HEK293 (cell line): ENCODE measurements at regions of chr15 and their contacts with region 1.

Region 1: GRCh38 chr15:79339564-79340314 is 28.8 kb downstream of the TMED3 start:
- H3K4me3 ChIP-seq: no peak overlapping the region
- H3K27ac ChIP-seq: no peak overlapping the region
- H3K4me1 ChIP-seq: no peaks in the 10 kb centered on the region
- CTCF ChIP-seq: peak; percentile 58; the same call in 1 of the 2 replicates

Region 2: DNA sequence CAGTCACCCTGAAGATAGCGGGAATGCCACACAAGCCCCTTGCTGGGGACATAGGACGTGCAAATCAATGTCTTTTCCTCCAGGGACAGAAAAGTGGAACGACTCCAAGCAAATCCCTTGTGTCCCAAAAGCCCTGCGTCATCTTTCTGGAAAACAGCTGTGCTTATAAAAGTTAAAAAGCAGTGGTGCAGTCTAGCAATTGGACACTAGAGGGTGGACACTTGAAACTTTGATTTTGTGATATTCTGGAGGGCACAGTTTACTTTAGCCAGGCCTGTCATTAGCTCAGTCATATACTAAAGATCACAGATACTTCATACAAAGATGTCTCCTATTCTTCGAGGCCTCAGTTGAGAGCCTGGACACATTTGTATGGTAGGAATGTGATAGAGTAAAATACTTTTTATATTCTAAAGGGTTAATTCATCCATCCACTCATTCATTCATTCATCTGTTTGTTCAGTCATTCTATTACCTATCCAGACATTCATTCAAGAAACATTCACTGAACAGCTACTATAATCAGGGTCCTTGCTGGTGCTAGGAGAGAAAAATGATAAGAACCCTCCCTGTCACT is 121.1 kb before region 1 on chr15:
- CTCF ChIA-PET with region 1: no interaction called
- POLR2A ChIA-PET with region 1: no interaction called
- H3K4me3 ChIP-seq: no peak overlapping the region
- H3K27ac ChIP-seq: no peak overlapping the region
- H3K4me1 ChIP-seq: no peaks in the 10 kb centered on the region
- CTCF ChIP-seq: no peak; the same call in 1 of the 2 replicates

Region 3: DNA sequence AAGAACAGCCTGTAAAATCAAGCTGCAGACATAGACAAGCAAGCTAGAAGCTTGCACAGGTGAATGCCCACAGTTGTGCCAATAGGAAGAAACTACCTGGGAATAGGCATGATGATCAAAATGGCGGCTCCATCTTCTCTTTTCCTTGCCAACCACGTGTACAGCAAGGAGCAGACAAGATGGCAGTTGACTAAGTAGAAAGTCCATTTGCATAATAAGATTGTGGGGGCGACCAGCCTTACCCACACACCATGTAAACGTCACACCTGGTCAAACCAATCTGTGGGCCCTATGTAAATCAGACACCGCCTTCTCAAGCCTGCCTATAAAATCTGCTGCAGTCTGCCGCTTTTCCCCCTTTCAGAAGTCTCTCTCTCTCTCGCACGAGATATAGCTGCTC is 82.3 kb before region 1 on chr15:
- CTCF ChIA-PET with region 1: no interaction called
- POLR2A ChIA-PET with region 1: no interaction called
- H3K4me3 ChIP-seq: no peak overlapping the region
- H3K27ac ChIP-seq: no peak overlapping the region
- H3K4me1 ChIP-seq: no peaks in the 10 kb centered on the region
- CTCF ChIP-seq: no peak

Region 4: DNA sequence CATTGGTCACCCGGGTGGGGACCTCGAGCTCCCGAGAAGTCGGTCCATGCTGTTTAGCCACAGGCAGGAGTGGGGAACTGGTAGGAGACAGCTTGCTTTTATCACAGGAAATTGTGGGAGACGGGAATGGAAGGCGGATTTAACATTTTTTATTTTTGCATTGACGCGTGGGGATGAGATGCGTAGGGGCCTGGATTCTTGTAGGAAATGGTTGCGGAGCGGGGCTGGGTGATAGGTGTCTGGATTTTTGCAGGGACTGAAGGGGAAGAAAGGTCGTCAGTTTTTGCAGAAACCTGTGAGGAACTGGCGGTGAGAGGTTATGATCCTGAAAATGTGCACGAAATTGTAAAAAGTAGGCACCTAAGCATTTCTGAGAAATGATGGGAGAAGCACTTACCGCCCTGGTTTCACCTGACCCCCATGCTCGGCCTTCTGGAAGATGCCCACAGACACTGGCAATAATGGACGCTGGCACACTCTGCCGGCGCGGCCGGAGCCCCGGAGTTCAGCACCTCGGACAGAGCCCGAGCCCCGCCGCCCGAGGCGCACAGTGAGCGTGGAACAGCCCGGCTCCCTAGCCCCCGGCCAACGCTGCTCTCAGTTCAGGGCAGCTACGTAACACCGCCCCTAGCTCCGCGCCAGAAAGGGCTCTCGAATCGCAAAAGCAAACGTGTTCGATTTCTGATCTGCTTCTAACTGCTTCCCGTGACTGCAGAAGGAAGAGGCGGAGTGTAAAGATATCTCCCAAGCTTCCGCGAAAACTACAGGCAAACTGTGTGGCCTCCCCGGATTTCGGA is 56.3 kb before region 1 on chr15:
- CTCF ChIA-PET with region 1: no interaction called
- POLR2A ChIA-PET with region 1: no interaction called
- H3K4me3 ChIP-seq: no peak overlapping the region
- H3K27ac ChIP-seq: no peak overlapping the region
- H3K4me1 ChIP-seq: no peaks in the 10 kb centered on the region
- CTCF ChIP-seq: no peak

Region 5: GRCh38 chr15:79364571-79365240 is 25.0 kb after region 1 on chr15:
- CTCF ChIA-PET with region 1: interaction called, 11 read pairs
- POLR2A ChIA-PET with region 1: no interaction called
- H3K4me3 ChIP-seq: no peak overlapping the region
- H3K27ac ChIP-seq: no peak overlapping the region
- H3K4me1 ChIP-seq: no peaks in the 10 kb centered on the region
- CTCF ChIP-seq: no peak

Region 6: GRCh38 chr15:79582650-79583049 is 242.9 kb after region 1 on chr15:
- CTCF ChIA-PET with region 1: interaction called, 12 read pairs
- POLR2A ChIA-PET with region 1: no interaction called
- H3K4me3 ChIP-seq: no peak overlapping the region
- H3K27ac ChIP-seq: no peak overlapping the region
- H3K4me1 ChIP-seq: no peaks in the 10 kb centered on the region
- CTCF ChIP-seq: no peak

Region 7: DNA sequence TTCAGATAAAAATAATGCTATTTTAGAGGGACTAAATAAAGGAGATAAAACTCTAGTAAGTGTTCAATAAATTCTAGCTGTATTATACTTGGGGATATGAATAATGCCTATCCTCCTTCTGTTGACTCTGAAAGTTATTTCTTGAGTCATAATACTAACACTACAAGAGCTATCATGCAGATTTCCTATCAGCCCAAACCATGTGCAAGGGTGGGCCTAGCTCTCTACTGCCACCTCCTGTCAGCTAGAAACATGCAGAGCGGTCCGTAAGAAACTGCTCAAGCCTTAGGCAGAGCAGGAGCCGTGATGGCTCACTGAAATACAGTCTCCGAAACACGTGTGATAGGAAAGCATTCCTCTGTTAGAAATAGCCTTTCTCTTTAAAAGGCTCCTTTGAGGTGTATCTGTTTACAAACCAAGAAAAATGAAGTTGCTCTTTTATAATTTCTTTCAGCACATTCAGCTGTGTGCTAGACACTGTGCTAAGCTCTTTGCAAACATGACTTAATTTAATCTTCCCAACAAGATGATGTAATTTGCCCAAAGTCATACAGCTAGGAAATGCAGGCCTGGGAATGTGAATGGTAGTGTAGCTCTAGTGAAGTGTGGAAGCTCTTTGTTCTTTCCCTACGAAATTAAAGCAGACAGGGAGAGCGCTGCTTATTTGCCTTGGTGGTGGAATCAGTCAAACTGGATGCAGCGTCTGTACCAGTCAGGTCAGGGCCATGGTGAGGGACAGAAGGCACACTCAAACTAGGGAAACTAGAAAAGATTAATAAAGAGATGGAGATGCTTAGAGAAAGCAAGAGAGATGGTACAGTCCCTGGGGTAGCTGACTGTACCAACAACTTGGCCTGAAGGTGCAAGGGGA is 514.0 kb after region 1 on chr15:
- CTCF ChIA-PET with region 1: interaction called, 20 read pairs
- POLR2A ChIA-PET with region 1: no interaction called
- H3K4me3 ChIP-seq: no peak overlapping the region
- H3K27ac ChIP-seq: no peak overlapping the region
- H3K4me1 ChIP-seq: no peaks in the 10 kb centered on the region
- CTCF ChIP-seq: peak; percentile 74